ENCODE measurements at regions of chr9 and their contacts with region 1.

Region 1: DNA sequence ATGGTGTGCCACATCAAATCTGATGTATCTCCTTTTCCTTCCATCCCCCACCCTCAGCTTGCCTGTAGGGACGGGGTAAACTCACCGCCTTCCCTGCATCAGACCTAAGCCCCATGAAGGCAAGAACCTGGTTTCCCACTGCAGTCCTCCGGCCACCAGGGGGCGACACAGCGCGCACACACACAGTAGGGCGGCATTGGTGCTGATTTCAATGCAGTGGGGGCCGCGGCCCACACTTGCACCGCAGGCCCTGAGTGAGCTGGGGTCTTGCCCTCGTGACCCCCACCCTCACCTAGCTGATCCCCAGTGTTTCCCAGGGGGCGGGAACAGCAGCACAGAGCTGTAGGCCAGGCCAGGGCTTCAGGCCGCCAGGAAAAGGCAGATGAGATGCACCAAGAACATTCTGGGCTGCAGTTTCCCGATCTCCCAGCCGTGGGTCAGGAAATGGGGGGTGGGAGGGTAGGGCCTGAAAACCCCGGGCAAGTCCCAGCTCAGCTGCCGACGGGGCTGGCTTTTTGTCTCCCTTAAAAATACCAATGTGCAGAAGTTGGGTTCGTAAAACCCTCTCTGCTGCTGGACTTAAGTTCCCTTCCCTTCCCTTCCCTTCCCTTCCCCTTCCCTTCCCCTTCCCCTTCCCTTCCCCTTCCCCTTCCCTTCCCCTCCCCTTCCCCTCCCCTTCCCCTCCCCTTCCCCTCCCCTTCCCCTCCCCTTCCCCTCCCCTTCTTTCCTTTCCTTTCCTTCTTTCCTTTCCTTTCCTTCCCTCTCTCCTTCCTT is 19.5 kb downstream of the FAM163B start:
- DNase-seq: peak; percentile 39 to 95
- H3K4me3 ChIP-seq: no peak overlapping the region
- H3K27ac ChIP-seq: no peak overlapping the region
- H3K4me1 ChIP-seq: peaks cover 0 to 16% (median 14%) of the 10 kb centered on the region in 4 experiments; a peak in 6 of 7 replicates
- H3K27me3 ChIP-seq: no peaks in the 10 kb centered on the region
- CTCF ChIP-seq: peak in 2 of 3 experiments; percentile 83 to 97; a peak in 3 of 4 replicates
- EP300 ChIP-seq: no peak
- POLR2A ChIP-seq: no peak
- RAD21 ChIP-seq: peak; percentile 54 to 66; a peak in 3 of 4 replicates

Region 2: DNA sequence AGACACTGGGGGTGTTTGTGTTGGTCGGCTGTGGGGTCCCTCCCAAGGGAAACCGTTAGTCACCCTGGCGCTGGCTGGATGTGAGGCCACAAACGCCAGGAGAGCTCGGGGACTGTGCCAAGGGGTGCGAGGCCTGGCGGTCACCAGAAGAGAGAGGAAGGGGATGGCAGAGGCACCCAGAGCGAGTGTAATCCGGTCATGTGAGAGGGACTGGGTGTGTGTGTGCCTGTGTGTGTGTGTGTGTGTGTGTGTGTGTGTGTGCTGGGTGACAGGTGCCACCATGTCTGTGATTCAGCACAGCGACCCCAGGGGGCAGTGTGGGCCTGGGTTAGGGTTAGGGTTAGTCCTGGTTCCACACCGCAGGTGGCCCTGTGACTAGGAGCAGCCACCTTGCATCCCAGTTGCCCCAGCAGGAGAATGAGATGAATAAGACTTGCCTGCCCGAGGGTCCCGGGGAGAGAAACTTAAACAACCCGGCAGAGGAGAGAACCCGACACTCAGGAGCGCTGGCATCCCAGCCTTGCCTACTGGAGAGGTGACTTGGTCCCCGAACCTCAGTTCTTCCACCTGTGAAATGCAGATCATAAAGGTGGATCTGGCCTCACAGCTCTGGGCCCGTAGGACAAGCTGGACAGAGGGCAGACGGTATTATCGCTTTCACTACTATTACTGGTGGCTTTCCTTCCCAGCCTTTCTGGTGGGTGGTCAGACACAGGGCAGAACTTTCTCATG is 56.5 kb before region 1 on chr9:
- CTCF ChIA-PET with region 1: interaction called, 19 read pairs
- POLR2A ChIA-PET with region 1: no interaction called
- DNase-seq: peak; percentile 44 to 93
- H3K4me3 ChIP-seq: no peak overlapping the region
- H3K27ac ChIP-seq: no peak overlapping the region
- H3K4me1 ChIP-seq: peaks cover 0 to 38% (median 21%) of the 10 kb centered on the region in 4 experiments; a peak in 6 of 7 replicates
- H3K27me3 ChIP-seq: peaks cover 0 to 31% (median 18%) of the 10 kb centered on the region in 4 experiments; a peak in 6 of 7 replicates
- CTCF ChIP-seq: peak in 2 of 3 experiments; percentile 82 to 89; a peak in 3 of 4 replicates
- EP300 ChIP-seq: no peak
- POLR2A ChIP-seq: no peak
- RAD21 ChIP-seq: peak; percentile 82 to 86

Region 3: GRCh38 chr9:133558191-133559126 is 31.2 kb before region 1 on chr9:
- CTCF ChIA-PET with region 1: interaction called, 14 read pairs
- POLR2A ChIA-PET with region 1: no interaction called
- DNase-seq: no peak
- H3K4me3 ChIP-seq: no peak overlapping the region
- H3K27ac ChIP-seq: no peak overlapping the region
- H3K4me1 ChIP-seq: peaks cover 9 to 17% (median 11%) of the 10 kb centered on the region in 4 experiments; a peak in 6 of 7 replicates
- H3K27me3 ChIP-seq: no peaks in the 10 kb centered on the region; a peak in 1 of 7 replicates
- CTCF ChIP-seq: no peak
- EP300 ChIP-seq: no peak
- POLR2A ChIP-seq: no peak
- RAD21 ChIP-seq: no peak

Region 4: GRCh38 chr9:133604214-133604613 is 14.6 kb after region 1 on chr9:
- CTCF ChIA-PET with region 1: interaction called, 79 read pairs
- POLR2A ChIA-PET with region 1: interaction called, 4 read pairs
- DNase-seq: no peak
- H3K4me3 ChIP-seq: no peak overlapping the region
- H3K27ac ChIP-seq: no peak overlapping the region
- H3K4me1 ChIP-seq: peaks cover 0 to 7% (median 3%) of the 10 kb centered on the region in 4 experiments; a peak in 5 of 7 replicates
- H3K27me3 ChIP-seq: peaks cover 5 to 15% (median 14%) of the 10 kb centered on the region in 4 experiments
- CTCF ChIP-seq: peak in 2 of 3 experiments; percentile 9 to 27; a peak in 1 of 4 replicates
- EP300 ChIP-seq: no peak
- POLR2A ChIP-seq: no peak
- RAD21 ChIP-seq: peak; percentile 49 to 52

Region 5: DNA sequence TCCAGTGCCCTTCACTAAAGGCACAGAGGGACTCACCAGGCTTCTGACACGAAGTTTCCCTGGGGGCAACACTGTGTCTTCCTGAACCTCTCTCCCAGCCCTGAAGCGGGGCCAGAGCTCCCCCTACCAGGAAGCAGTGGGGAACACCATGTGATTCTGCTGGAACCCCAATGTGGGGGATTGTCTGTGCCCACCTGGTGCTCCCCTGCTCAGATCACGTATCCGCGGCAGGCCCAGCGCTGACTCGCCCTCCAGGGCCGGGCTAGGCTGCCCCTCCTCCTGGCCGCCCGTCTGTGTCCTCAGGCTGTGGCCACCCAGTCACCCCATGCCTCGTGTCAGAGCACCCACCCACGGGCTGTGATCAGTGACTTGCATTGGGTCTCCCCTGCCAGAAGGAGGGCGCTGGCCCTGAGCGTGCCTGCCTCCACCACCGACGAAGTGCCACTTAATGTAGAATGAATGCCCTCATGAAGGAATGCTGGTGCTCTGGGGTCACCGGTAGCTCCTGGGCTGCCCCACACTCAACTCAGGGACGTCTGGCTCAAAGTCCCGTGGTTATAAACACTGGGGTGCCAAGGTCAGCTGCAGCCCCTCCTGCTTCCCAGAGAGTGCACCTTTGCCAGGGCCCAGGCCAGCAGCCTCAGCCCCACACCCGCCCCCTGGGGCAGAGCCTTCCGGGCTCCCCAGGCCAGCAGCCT is 126.4 kb after region 1 on chr9:
- CTCF ChIA-PET with region 1: interaction called, 29 read pairs
- POLR2A ChIA-PET with region 1: interaction called, 3 read pairs
- DNase-seq: peak in 1 of 2 experiments; percentile 80
- H3K4me3 ChIP-seq: no peak overlapping the region
- H3K27ac ChIP-seq: no peak overlapping the region
- H3K4me1 ChIP-seq: peaks cover 0 to 9% (median 3%) of the 10 kb centered on the region in 4 experiments; a peak in 3 of 7 replicates
- H3K27me3 ChIP-seq: no peaks in the 10 kb centered on the region
- CTCF ChIP-seq: peak in 2 of 3 experiments; percentile 73 to 86; a peak in 2 of 4 replicates
- EP300 ChIP-seq: no peak
- POLR2A ChIP-seq: no peak
- RAD21 ChIP-seq: peak; percentile 84 to 87